AG04449 (cell line): ENCODE measurements at regions of chr10 and their contacts with region 1.

Region 1: GRCh38 chr10:95693668-95694534 is at the start of gene TCTN3:
- DNase-seq: peak; percentile 98
- H3K4me3 ChIP-seq: peak within 1 kb of the TSS; percentile 98
- CTCF ChIP-seq: peak; percentile 100

Region 2: DNA sequence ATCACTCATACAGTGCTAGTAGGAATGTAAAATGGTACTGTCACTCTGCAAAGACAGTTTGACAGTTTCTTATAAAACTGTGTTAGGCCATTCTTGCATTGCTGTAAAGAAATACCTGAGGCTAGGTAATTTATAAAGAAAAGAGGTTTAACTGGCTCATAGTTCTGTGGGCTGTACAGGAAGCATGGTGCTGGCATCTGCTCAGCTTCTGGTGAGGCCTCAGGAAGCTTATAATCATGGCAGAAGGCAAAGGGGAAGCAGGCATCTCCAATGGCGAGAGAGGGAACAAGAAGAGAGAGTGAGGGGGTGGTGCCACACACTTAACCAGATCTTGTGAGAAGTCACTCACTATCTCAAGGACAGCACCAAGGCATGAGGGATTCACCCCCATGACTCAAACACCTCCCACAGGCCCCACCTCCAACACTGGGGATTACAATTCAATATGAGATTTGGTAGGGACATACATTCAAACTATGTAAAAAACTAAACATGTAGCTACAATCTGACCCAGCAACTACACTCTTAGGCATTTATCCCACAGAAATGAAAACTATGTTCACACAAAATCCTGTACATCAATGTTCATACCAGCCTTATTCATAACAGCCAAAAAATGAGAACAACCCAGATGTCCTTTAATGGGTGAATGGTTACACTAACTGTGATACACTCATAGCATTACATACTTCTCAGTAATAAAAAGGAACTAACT is 42.4 kb before region 1 on chr10:
- CTCF ChIA-PET with region 1: interaction called, 11 read pairs
- POLR2A ChIA-PET with region 1: no interaction called
- DNase-seq: peak; percentile 59
- H3K4me3 ChIP-seq: no peak overlapping the region
- CTCF ChIP-seq: no peak

Region 3: GRCh38 chr10:95675403-95676112 is 18.3 kb before region 1 on chr10:
- CTCF ChIA-PET with region 1: interaction called, 53 read pairs
- POLR2A ChIA-PET with region 1: no interaction called
- DNase-seq: no peak
- H3K4me3 ChIP-seq: no peak overlapping the region
- CTCF ChIP-seq: no peak

Region 4: DNA sequence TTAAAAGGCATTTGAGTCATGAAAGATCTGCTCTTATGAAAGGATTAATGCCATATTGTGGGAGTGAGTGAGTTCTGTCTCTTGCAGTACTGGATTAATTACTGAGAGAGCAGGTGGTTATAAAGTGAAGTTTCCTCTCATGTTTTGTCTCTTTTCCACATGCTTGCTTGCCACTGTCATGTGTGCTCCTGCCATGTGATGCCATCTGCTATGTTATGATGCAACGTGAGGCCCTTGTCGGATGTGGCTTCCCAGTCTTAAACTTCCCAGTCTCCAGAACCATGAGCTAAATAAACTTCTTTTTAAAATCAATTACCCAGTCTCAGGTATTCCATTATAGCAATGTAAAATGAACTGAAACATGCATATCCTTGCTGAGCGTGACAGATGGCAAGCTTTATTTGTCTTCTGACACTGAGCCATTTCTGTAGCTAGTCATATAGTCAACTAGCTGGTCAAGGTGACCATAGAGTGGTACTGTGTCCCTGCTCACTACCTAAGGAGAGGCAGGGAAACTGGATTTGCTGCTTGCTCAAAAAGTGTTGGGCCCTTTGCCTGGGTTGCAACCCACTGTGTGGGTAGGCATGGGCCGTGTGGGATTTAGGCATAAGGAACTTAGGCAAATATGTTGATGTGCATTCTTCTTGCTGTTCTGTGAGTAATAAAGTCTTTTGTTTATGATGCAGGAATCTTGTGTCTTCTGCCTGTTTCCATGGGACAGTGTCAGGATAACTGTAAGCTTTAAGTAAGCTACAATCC is 22.7 kb after region 1 on chr10:
- CTCF ChIA-PET with region 1: interaction called, 12 read pairs
- POLR2A ChIA-PET with region 1: no interaction called
- DNase-seq: no peak
- H3K4me3 ChIP-seq: no peak overlapping the region
- CTCF ChIP-seq: no peak

Region 5: GRCh38 chr10:95818668-95819067 is 124.8 kb after region 1 on chr10:
- CTCF ChIA-PET with region 1: interaction called, 28 read pairs
- POLR2A ChIA-PET with region 1: no interaction called
- DNase-seq: peak; percentile 55
- H3K4me3 ChIP-seq: no peak overlapping the region
- CTCF ChIP-seq: no peak

Region 6: GRCh38 chr10:95841661-95842498 is 148.0 kb after region 1 on chr10:
- CTCF ChIA-PET with region 1: interaction called, 495 read pairs
- POLR2A ChIA-PET with region 1: interaction called, 4 read pairs
- DNase-seq: peak; percentile 9
- H3K4me3 ChIP-seq: no peak overlapping the region
- CTCF ChIP-seq: peak; percentile 45

Region 7: GRCh38 chr10:95873651-95874050 is 179.8 kb after region 1 on chr10:
- CTCF ChIA-PET with region 1: interaction called, 50 read pairs
- POLR2A ChIA-PET with region 1: no interaction called
- DNase-seq: no peak
- H3K4me3 ChIP-seq: no peak overlapping the region
- CTCF ChIP-seq: no peak